ENCODE measurements at regions of chr21 and their contacts with region 1.

Region 1: GRCh38 chr21:26614251-26614650 is 41.2 kb upstream of the CYYR1 start:
- DNase-seq: no peak
- H3K4me3 ChIP-seq: no peak overlapping the region
- H3K27ac ChIP-seq: no peak overlapping the region
- H3K4me1 ChIP-seq: no peaks in the 10 kb centered on the region
- H3K27me3 ChIP-seq: no peaks in the 10 kb centered on the region
- CTCF ChIP-seq: no peak

Region 2: GRCh38 chr21:26679284-26679683 is 65.0 kb after region 1 on chr21:
- intact Hi-C with region 1: loop called (anchors 10 kb)
- DNase-seq: peak in 2 of 5 donors; percentile 7 to 8
- H3K4me3 ChIP-seq: no peak overlapping the region
- H3K27ac ChIP-seq: no peak overlapping the region
- H3K4me1 ChIP-seq: no peaks in the 10 kb centered on the region
- H3K27me3 ChIP-seq: no peaks in the 10 kb centered on the region
- CTCF ChIP-seq: no peak